Activated CD4-positive, alpha-beta T cell treated with anti-CD3 and anti-CD28 coated beads for 36 hours (primary cell): ENCODE measurements at regions of chr13 and their contacts with region 1.

Region 1: DNA sequence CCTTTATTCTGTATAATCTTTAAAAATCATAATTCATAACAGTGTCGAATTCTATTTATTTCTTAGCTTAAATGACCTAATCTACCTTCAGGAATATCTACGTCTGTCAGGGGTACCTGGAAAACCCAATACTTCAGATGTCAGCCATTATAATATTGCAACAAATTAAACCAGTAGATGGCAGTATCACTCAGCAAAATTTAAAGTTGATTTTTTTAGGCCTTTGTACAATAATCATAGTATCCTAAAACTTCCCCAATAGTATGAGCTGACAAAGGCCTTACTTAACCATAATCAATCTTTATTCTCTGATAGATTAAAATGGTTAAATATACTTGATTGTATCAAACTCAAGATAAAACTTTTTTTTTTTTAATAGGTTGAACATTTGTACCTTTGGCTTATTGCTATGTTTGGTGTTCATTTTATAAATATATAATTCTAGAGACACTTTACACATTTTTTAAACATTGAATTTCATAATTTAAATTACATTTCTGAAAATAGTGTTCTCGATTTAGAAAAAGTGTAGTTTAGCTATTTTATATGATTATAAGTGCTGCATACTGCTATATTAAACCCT is 830.2 kb upstream of the SPRY2 start:
- DNase-seq: no peak
- ATAC-seq: no peak
- H3K4me3 Mint-ChIP-seq: no peak overlapping the region
- H3K27ac Mint-ChIP-seq: no peak overlapping the region
- H3K4me1 Mint-ChIP-seq: no peaks in the 10 kb centered on the region
- H3K27me3 Mint-ChIP-seq: no peaks in the 10 kb centered on the region

Region 2: DNA sequence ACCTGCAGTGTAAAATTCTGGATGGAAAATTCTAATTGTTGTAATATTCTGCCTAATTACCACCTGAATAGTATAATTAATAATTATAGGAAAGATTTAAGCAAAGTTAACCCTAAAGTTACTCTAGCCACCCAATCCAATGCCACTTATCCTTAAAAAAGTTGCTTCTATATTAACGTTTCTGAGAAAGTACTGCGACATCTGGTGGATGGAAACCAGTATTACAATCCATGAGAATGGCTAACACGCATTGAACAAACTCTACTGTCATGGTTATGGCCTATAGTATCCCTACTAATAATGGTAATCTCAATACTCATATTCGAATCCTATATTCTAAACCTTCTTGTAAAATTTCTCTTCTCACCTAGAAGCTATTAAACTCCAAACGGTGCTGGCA is 1159.3 kb after region 1 on chr13:
- CTCF ChIA-PET with region 1: no interaction called
- POLR2A ChIA-PET with region 1: no interaction called
- intact Hi-C with region 1: loop called in 1 of 2 experiments (anchors 1 kb)
- DNase-seq: no peak
- ATAC-seq: no peak
- H3K4me3 Mint-ChIP-seq: no peak overlapping the region
- H3K27ac Mint-ChIP-seq: no peak overlapping the region
- H3K4me1 Mint-ChIP-seq: no peaks in the 10 kb centered on the region
- H3K27me3 Mint-ChIP-seq: no peaks in the 10 kb centered on the region